ENCODE measurements at regions of chr9 and their contacts with region 1.

Region 1: GRCh38 chr9:134434894-134435506 is 108.7 kb downstream of the RXRA start:
- DNase-seq: peak; percentile 90 to 99 (median 98)
- ATAC-seq: peak; percentile 85 to 89 (median 87)
- H3K4me3 ChIP-seq: peak overlapping the region in 1 of 4 donors; percentile 2
- H3K27ac ChIP-seq: peak overlapping the region; percentile 56 to 88 (median 81)
- H3K4me1 ChIP-seq: peaks cover 13 to 17% (median 14%) of the 10 kb centered on the region in 3 donors
- H3K27me3 ChIP-seq: no peaks in the 10 kb centered on the region
- CTCF ChIP-seq: no peak

Region 2: DNA sequence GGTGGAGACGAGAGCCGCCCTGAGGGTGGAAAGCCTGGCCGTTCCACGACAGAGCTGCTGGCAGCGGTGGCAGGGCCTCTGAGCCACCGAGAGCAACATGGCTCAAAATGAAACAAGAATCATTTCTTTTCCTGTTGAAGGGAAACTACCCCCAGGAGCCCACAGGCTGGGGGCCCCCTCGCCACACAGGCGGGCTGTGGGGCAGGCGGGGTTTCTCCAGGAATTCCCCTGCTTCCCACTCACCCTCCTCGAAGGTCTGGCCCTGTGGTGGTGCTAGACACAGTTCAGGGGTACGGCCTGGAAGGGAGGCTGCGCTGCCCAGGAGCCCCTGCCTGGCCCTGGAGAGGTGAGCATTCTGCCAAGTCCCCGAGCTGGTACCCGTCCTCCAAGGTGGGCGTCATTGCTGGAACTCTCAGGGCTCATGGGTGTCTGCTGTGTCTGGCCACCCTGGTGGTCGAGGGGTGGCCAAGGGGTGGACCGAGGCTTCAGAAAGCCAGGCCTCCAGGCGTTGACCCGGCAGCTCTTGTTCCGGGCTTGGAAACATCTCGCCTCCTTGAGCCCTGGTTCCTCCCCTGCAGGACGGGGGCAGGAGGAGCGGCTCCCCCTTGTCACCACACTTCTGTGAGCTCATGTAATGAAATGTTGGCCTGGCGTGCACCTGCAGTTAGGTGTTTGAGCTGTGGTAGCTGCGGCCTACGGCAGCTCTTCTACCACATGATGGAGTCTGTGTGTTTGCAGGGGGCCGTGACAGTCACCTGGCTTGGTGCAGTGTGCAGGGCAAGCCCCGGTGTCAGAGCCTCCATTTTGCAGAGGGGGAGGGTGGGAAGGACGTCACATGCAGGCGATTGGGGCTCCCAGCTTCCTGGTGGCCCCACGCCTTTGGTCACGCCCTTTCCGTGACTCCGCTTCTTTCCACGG is 43.4 kb before region 1 on chr9:
- intact Hi-C with region 1: loop called in 1 of 3 experiments (anchors 5 kb)
- DNase-seq: no peak
- ATAC-seq: no peak
- H3K4me3 ChIP-seq: no peak overlapping the region
- H3K27ac ChIP-seq: no peak overlapping the region
- H3K4me1 ChIP-seq: peaks cover 16 to 21% (median 19%) of the 10 kb centered on the region in 3 donors
- H3K27me3 ChIP-seq: no peaks in the 10 kb centered on the region
- CTCF ChIP-seq: no peak

Region 3: GRCh38 chr9:135009711-135010584 is 574.9 kb after region 1 on chr9:
- intact Hi-C with region 1: no loop called
- DNase-seq: peak in 1 of 6 donors; percentile 39
- ATAC-seq: no peak
- H3K4me3 ChIP-seq: no peak overlapping the region
- H3K27ac ChIP-seq: no peak overlapping the region
- H3K4me1 ChIP-seq: no peaks in the 10 kb centered on the region
- H3K27me3 ChIP-seq: no peaks in the 10 kb centered on the region
- CTCF ChIP-seq: no peak